GM13977 (cell line): ENCODE measurements at regions of chr13 and their contacts with region 1.

Region 1: GRCh38 chr13:23466144-23467002 is 32.9 kb upstream of the SACS start:
- DNase-seq: peak; percentile 87
- CTCF ChIP-seq: peak; percentile 74

Region 2: DNA sequence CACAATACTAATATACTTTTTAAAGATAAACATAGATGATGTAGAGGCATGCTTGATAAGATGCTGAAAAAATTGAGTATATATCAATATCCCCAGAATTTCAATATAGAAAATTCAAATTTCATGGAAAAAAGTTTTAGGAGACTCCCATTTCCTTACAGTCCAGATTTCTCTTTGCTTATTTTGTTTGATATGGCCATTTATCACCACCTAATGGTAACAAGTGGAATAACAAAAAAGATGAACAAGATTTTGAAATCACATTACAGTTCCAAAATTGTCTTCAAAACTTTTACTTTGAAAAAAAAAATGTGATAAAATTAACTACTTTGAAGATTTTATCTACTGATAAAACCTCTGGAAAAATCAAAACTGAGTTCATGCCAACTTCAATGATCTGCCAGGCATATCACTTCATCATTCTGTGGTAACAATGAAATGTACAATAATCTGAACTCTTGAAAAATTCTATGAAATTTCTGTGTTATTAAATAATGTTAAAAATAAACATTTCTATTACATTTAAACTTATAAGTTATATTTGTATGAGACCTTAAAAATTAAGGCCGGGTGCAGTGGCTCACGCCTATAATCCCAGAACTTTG is 405.3 kb after region 1 on chr13:
- in situ Hi-C with region 1: loop called (anchors 10 kb)
- DNase-seq: peak; percentile 37
- CTCF ChIP-seq: peak; percentile 48